PC-9 (cell line): ENCODE measurements at regions of chrX and their contacts with region 1.

Region 1: GRCh38 chrX:105136786-105137185 is 83.7 kb downstream of the TEX13A start:
- DNase-seq: peak; percentile 50 to 92
- H3K4me3 ChIP-seq: no peak overlapping the region
- H3K27ac ChIP-seq: peak overlapping the region; percentile 58
- H3K4me1 ChIP-seq: peaks cover 27% of the 10 kb centered on the region
- H3K27me3 ChIP-seq: no peaks in the 10 kb centered on the region
- CTCF ChIP-seq: no peak

Region 2: DNA sequence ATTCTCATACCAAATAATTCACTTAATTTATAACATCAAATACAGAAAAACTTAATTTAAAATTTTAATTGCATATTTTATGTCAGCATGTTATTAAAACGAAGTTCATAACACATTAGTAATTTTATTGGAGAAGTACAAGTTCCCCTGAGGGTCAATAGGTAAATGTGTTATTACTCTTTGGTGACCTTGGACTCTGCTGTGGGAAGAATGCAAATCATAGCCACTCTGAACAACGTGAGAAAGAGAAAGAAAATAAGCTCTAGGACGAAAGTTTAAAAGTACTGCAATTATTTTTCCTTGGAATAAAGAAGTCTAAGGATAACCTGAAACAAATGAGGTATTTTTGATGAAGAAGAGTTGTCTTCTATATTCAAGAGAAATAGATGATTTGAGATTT is 455.6 kb before region 1 on chrX:
- CTCF ChIA-PET with region 1: no interaction called
- POLR2A ChIA-PET with region 1: no interaction called
- intact Hi-C with region 1: no loop called
- DNase-seq: no peak
- H3K4me3 ChIP-seq: no peak overlapping the region
- H3K27ac ChIP-seq: no peak overlapping the region
- H3K4me1 ChIP-seq: peaks cover 26% of the 10 kb centered on the region
- H3K27me3 ChIP-seq: no peaks in the 10 kb centered on the region
- CTCF ChIP-seq: no peak

Region 3: GRCh38 chrX:106862972-106863688 is 1726.3 kb after region 1 on chrX:
- CTCF ChIA-PET with region 1: interaction called, 12 read pairs
- POLR2A ChIA-PET with region 1: no interaction called
- intact Hi-C with region 1: no loop called
- DNase-seq: peak in 1 of 2 experiments; percentile 22
- H3K4me3 ChIP-seq: no peak overlapping the region
- H3K27ac ChIP-seq: no peak overlapping the region
- H3K4me1 ChIP-seq: no peaks in the 10 kb centered on the region
- H3K27me3 ChIP-seq: no peaks in the 10 kb centered on the region
- CTCF ChIP-seq: peak; percentile 63